ENCODE measurements at regions of chr14 and their contacts with region 1.

Region 1: GRCh38 chr14:94080471-94081289 is at the start of gene DDX24:
- DNase-seq: peak; percentile 97 to 99
- ATAC-seq: peak; percentile 99 to 100 (median 100)
- H3K4me3 ChIP-seq: peak within 1 kb of the TSS; percentile 87
- H3K27ac ChIP-seq: peak within 1 kb of the TSS; percentile 98
- H3K4me1 ChIP-seq: peaks cover 48% of the 10 kb centered on the region
- H3K27me3 ChIP-seq: no peaks in the 10 kb centered on the region
- CTCF ChIP-seq: no peak
- total RNA-seq, gene DDX24: 145 to 190 (median 171) TPM

Region 2: GRCh38 chr14:94048691-94049624 is 31.7 kb before region 1 on chr14:
- intact Hi-C with region 1: loop called in 1 of 2 experiments (anchors 2 kb)
- DNase-seq: no peak
- ATAC-seq: no peak
- H3K4me3 ChIP-seq: no peak overlapping the region
- H3K27ac ChIP-seq: no peak overlapping the region
- H3K4me1 ChIP-seq: peaks cover 26% of the 10 kb centered on the region
- H3K27me3 ChIP-seq: no peaks in the 10 kb centered on the region
- CTCF ChIP-seq: no peak

Region 3: GRCh38 chr14:94110552-94111181 is 30.0 kb after region 1 on chr14 and contains the start of gene IFI27:
- intact Hi-C with region 1: no loop called
- DNase-seq: peak in 1 of 2 donors; percentile 54
- ATAC-seq: peak in 3 of 4 donors; percentile 49 to 69 (median 64)
- H3K4me3 ChIP-seq: peak within 1 kb of the TSS; percentile 54
- H3K27ac ChIP-seq: peak within 1 kb of the TSS; percentile 67
- H3K4me1 ChIP-seq: no peaks in the 10 kb centered on the region
- H3K27me3 ChIP-seq: no peaks in the 10 kb centered on the region
- CTCF ChIP-seq: no peak
- total RNA-seq, gene IFI27: 52.8 to 119 (median 82.2) TPM